MCF 10A (cell line): ENCODE measurements at regions of chr4 and their contacts with region 1.

Region 1: GRCh38 chr4:103091601-103092223 is 7.9 kb downstream of the BDH2 start:
- DNase-seq: peak; percentile 67
- H3K4me3 Mint-ChIP-seq: no peak overlapping the region
- H3K27ac Mint-ChIP-seq: no peak overlapping the region
- H3K4me1 Mint-ChIP-seq: peaks cover 14% of the 10 kb centered on the region
- H3K27me3 Mint-ChIP-seq: no peaks in the 10 kb centered on the region
- CTCF ChIP-seq: peak; percentile 60

Region 2: DNA sequence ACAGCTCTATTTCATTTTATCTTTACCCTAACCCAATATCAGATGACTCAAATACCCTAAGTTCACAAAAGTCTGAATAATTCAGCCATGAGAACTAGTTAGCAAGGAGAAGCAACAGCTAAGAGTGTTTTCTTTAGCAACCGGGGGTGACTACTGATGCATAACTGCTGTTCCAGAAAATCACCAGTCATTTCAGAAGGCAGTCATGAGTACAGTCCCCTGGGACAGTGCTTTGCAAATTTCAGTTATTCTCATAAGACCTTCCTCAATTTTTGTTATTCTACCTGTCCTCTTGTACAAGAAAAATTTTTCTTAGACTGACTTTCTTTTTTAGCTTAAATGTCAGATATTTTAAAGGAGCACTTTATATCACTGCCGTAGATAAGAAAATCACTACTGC is 1284.8 kb before region 1 on chr4:
- CTCF ChIA-PET with region 1: no interaction called
- POLR2A ChIA-PET with region 1: no interaction called
- intact Hi-C with region 1: no loop called
- DNase-seq: peak; percentile 3
- H3K4me3 Mint-ChIP-seq: no peak overlapping the region
- H3K27ac Mint-ChIP-seq: no peak overlapping the region
- H3K4me1 Mint-ChIP-seq: no peaks in the 10 kb centered on the region
- H3K27me3 Mint-ChIP-seq: no peaks in the 10 kb centered on the region
- CTCF ChIP-seq: no peak

Region 3: DNA sequence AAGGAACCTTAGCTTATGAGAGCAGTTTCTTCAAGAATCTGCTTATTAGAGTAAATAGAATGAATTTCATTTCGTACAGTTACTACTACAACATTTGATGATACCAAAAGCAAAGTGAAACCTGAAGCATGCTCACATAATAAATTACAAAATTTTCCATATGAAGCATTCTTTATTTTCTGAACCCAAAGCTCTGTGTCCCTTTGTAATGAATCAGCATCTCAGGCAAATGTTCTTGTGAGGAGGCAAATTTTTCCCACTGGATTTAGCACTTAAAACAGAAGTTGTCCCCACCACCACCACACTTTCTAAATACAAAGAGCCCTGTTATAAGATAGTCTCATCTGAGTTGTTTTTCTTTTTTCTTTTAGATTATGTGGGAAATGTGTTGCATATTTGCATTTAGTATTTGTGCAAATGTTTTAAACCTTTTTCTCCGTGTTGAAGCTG is 661.2 kb before region 1 on chr4:
- CTCF ChIA-PET with region 1: interaction called, 12 read pairs
- POLR2A ChIA-PET with region 1: no interaction called
- intact Hi-C with region 1: loop called (anchors 5 kb)
- DNase-seq: peak; percentile 35
- H3K4me3 Mint-ChIP-seq: peak overlapping the region; percentile 81
- H3K27ac Mint-ChIP-seq: peak overlapping the region; percentile 73
- H3K4me1 Mint-ChIP-seq: peaks cover 11% of the 10 kb centered on the region
- H3K27me3 Mint-ChIP-seq: no peaks in the 10 kb centered on the region
- CTCF ChIP-seq: no peak

Region 4: GRCh38 chr4:102449751-102450352 is 641.9 kb before region 1 on chr4:
- CTCF ChIA-PET with region 1: interaction called, 4 read pairs
- POLR2A ChIA-PET with region 1: no interaction called
- intact Hi-C with region 1: loop called (anchors 1 kb)
- DNase-seq: peak; percentile 72
- H3K4me3 Mint-ChIP-seq: no peak overlapping the region
- H3K27ac Mint-ChIP-seq: no peak overlapping the region
- H3K4me1 Mint-ChIP-seq: no peaks in the 10 kb centered on the region
- H3K27me3 Mint-ChIP-seq: no peaks in the 10 kb centered on the region
- CTCF ChIP-seq: peak; percentile 63

Region 5: GRCh38 chr4:102610007-102610406 is 481.7 kb before region 1 on chr4:
- CTCF ChIA-PET with region 1: interaction called, 16 read pairs
- POLR2A ChIA-PET with region 1: no interaction called
- intact Hi-C with region 1: no loop called
- DNase-seq: no peak
- H3K4me3 Mint-ChIP-seq: no peak overlapping the region
- H3K27ac Mint-ChIP-seq: peak overlapping the region; percentile 16
- H3K4me1 Mint-ChIP-seq: peaks cover 16% of the 10 kb centered on the region
- H3K27me3 Mint-ChIP-seq: no peaks in the 10 kb centered on the region
- CTCF ChIP-seq: peak; percentile 16

Region 6: DNA sequence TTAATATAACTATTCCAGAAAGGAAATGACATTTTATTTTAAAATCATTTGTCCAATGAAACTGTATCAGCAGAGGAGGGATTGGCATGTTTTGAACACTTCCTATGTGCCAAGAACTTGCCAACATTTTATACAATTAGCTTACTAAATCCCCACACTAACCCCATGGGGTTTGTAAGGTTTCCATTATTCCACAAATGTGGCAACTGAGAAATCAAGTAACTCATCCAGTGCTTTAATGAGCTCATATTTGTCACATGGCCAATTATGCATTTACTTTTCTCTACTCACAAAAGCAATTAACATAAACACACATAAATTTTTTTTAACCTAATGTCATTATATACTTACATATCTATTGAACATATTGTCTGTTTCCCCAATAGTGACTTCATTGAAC is 368.2 kb before region 1 on chr4:
- CTCF ChIA-PET with region 1: no interaction called
- POLR2A ChIA-PET with region 1: no interaction called
- intact Hi-C with region 1: no loop called
- DNase-seq: no peak
- H3K4me3 Mint-ChIP-seq: no peak overlapping the region
- H3K27ac Mint-ChIP-seq: no peak overlapping the region
- H3K4me1 Mint-ChIP-seq: no peaks in the 10 kb centered on the region
- H3K27me3 Mint-ChIP-seq: no peaks in the 10 kb centered on the region
- CTCF ChIP-seq: no peak

Region 7: DNA sequence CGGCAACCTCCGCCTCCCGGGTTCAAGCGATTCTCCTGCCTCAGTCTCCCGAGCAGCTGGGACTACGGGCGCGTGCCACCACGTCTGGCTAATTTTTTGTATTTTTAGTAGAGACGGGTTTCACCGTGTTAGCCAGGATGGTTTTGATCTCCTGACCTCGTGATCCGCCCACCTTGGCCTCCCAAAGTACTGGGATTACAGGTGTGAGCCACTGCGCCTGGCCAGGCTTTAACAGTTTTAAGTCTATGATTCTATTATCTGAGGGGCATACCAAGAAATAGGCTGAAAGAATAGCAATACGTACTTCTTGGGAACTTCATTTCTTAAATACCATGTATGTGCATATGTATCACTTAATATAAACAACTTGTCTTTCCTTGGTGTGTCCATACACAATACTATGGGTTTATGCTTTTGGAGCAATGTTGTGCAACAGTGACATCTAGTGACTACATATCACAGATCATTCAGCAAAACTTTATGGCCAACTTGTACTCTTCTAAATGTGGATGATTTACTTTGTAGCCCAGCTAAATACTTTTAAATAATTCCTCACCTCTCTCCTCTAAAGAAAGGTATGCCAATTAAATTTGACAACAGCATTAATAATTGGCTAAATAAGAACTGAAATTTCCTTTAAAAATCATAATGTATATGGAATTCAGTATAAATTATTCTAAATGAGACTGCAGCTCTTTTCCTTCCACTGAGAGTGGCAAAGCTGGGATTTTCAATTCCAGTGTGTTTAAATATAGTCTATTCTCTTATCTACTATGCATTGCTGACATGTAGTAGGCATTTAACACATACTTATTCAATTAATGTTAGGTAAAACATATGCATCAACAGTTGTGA is 82.6 kb before region 1 on chr4:
- CTCF ChIA-PET with region 1: interaction called, 13 read pairs
- POLR2A ChIA-PET with region 1: no interaction called
- intact Hi-C with region 1: loop called (anchors 1 kb)
- DNase-seq: peak; percentile 80
- H3K4me3 Mint-ChIP-seq: no peak overlapping the region
- H3K27ac Mint-ChIP-seq: no peak overlapping the region
- H3K4me1 Mint-ChIP-seq: peaks cover 26% of the 10 kb centered on the region
- H3K27me3 Mint-ChIP-seq: peaks cover 9% of the 10 kb centered on the region
- CTCF ChIP-seq: peak; percentile 75

Region 8: DNA sequence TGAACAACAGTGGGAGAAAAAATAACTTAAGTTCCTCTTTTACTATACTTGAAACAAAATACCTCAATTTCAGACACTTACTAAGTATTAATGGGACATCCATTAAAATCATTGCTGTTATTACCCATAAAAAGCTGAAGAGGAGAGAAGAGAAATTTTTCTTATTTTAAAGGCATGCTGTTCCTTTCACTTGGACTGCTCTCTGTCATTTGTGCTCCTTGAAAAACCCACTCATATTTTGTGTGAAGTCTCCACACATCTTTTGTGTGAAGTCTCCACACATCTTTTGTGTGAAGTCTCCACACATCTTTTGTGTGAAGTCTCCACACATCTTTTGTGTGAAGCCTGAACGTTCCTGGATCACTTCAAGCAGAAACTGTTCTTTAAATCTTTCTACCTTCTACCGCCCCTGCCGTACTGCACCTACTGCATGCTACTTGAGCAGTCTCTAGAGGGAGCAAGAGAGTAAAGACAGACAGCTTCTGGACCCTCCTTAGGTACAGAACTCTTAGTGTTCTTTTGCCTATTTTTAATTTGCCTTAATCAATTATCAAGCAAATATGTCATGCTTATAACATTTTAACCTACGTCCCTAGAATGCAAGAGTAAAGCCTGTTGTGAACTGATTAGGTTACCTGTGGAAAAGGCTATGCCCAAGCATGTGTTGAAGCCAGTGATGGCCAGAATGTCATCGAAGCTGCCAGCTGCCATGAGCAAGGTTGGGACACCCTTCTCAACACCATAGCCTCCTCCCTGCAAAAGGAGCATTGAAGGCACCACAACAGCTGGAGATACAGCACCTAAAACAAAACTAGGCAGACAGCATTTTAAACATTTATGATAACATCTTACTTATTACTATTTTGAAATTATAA is 45.1 kb before region 1 on chr4:
- CTCF ChIA-PET with region 1: interaction called, 13 read pairs
- POLR2A ChIA-PET with region 1: no interaction called
- intact Hi-C with region 1: loop called (anchors 1 kb)
- DNase-seq: peak; percentile 58
- H3K4me3 Mint-ChIP-seq: no peak overlapping the region
- H3K27ac Mint-ChIP-seq: no peak overlapping the region
- H3K4me1 Mint-ChIP-seq: no peaks in the 10 kb centered on the region
- H3K27me3 Mint-ChIP-seq: no peaks in the 10 kb centered on the region
- CTCF ChIP-seq: peak; percentile 37

Region 9: GRCh38 chr4:103075901-103076739 is 15.6 kb before region 1 on chr4:
- CTCF ChIA-PET with region 1: interaction called, 104 read pairs
- POLR2A ChIA-PET with region 1: interaction called, 10 read pairs
- intact Hi-C with region 1: no loop called
- DNase-seq: peak; percentile 74
- H3K4me3 Mint-ChIP-seq: peak overlapping the region; percentile 93
- H3K27ac Mint-ChIP-seq: peak overlapping the region; percentile 92
- H3K4me1 Mint-ChIP-seq: peaks cover 20% of the 10 kb centered on the region
- H3K27me3 Mint-ChIP-seq: no peaks in the 10 kb centered on the region
- CTCF ChIP-seq: no peak

Region 10: GRCh38 chr4:103198111-103198765 is 106.5 kb after region 1 on chr4 and contains the start of gene CENPE:
- CTCF ChIA-PET with region 1: no interaction called
- POLR2A ChIA-PET with region 1: no interaction called
- intact Hi-C with region 1: no loop called
- DNase-seq: peak; percentile 91
- H3K4me3 Mint-ChIP-seq: peak within 1 kb of the TSS; percentile 84
- H3K27ac Mint-ChIP-seq: peak within 1 kb of the TSS; percentile 99
- H3K4me1 Mint-ChIP-seq: peaks cover 20% of the 10 kb centered on the region
- H3K27me3 Mint-ChIP-seq: no peaks in the 10 kb centered on the region
- CTCF ChIP-seq: no peak
- total RNA-seq, gene CENPE: 25.2 and 32.4 TPM in 2 replicates